Cardiac septum (tissue), 1 donor: ENCODE measurements at regions of chr3 and their contacts with region 1.

Region 1: GRCh38 chr3:134697830-134698689 is 47.2 kb upstream of the KY start:
- DNase-seq: no peak

Region 2: GRCh38 chr3:134754768-134755559 is 56.9 kb after region 1 on chr3:
- intact Hi-C with region 1: loop called (anchors 2 kb)
- DNase-seq: no peak